Endothelial cell of umbilical vein (primary cell): ENCODE measurements at regions of chr2 and their contacts with region 1.

Region 1: GRCh38 chr2:154375579-154375931 is 322.9 kb upstream of the KCNJ3 start:
- DNase-seq: peak; percentile 46
- H3K4me3 ChIP-seq: no peak overlapping the region
- H3K27ac ChIP-seq: no peak overlapping the region
- H3K4me1 ChIP-seq: no peaks in the 10 kb centered on the region
- H3K27me3 ChIP-seq: no peaks in the 10 kb centered on the region
- CTCF ChIP-seq: peak in 1 of 2 donors; percentile 16
- POLR2A ChIP-seq: no peak

Region 2: GRCh38 chr2:152740743-152741328 is 1634.7 kb before region 1 on chr2:
- CTCF ChIA-PET with region 1: interaction called, 5 read pairs
- POLR2A ChIA-PET with region 1: no interaction called
- dilution Hi-C with region 1: no loop called
- intact Hi-C with region 1: loop called (anchors 5 kb)
- DNase-seq: peak; percentile 78
- H3K4me3 ChIP-seq: no peak overlapping the region
- H3K27ac ChIP-seq: no peak overlapping the region
- H3K4me1 ChIP-seq: peaks cover 5% of the 10 kb centered on the region
- H3K27me3 ChIP-seq: no peaks in the 10 kb centered on the region
- CTCF ChIP-seq: peak; percentile 52
- POLR2A ChIP-seq: no peak

Region 3: DNA sequence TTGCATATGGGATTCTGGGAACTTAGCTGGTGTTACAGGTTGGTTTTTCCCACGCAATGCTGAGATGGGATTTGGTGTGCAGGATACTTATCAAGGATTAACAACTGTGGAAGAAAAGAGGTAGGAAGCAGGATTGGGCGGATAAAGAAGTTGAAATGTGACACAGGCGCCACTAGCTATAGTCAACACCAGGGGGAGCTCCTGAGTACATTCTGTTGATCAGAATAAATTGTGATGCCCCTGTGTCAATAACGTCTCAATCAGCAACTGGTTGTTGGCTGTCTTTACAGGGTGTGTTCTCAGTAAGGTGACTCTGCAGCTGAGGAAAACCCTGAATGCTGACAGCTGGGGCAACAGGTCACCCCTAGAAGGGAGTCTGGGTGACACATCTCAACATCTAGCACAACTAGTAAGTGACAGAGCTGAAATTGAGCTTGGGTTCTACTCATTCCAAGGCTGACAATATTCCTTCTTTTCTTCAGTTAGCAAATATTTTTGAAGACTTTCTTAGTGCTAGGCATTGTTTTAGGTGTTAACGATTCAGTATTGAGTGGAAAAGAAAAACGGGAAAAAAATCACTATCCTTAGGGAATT is 1514.1 kb before region 1 on chr2:
- CTCF ChIA-PET with region 1: interaction called, 25 read pairs
- POLR2A ChIA-PET with region 1: no interaction called
- dilution Hi-C with region 1: no loop called
- intact Hi-C with region 1: no loop called
- DNase-seq: peak; percentile 30
- H3K4me3 ChIP-seq: no peak overlapping the region
- H3K27ac ChIP-seq: no peak overlapping the region
- H3K4me1 ChIP-seq: no peaks in the 10 kb centered on the region
- H3K27me3 ChIP-seq: no peaks in the 10 kb centered on the region
- CTCF ChIP-seq: peak; percentile 55 to 72
- POLR2A ChIP-seq: no peak

Region 4: DNA sequence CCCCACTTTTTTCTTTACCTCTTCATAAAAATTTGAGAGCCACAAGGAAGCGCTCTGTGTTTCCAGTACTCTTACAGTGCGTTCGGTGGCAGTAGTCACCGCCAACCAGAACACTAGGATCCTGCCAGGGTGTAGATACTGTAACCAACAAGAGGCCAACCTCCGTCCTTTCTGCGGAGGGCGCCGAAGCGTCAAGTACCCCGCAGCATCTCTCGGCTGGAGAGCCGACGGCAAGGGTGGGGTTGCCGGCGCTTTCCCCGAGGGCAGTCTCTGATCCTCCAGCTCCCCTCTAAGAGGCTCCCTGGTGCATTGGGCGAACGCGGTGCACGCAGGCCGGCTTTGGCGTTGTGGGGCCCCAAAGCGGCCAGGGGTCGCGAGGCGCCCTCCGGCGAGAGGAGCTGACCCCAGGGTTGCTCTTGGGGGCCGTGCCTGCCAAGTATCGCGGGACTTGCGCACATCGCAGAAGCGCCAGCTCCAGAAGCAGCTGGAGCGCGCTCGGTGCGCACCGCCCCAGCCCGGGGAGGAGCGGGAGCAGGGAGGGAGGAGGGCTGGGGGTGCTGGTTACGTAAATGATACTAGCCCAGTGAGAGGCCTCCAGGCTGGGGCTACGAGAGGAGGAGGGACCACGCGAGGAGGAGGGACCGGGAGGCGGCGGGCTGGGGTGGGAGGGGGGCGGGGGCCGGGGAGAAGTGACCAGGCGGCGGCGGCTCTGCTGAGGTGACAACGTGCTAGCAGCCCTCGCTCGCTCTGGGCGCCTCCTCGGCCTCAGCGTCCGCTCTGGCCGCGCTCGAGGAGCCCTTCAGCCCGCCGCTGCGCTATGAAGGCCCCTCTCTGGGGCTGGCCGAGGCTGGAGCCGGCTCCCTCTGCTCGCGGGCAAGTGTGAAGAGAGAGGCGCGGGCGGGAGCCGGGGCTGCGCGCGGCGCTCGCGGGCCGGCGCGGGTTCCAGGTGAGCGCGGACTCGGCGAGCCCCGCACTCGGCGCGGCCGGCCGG is 504.0 kb before region 1 on chr2 and contains the start of gene GALNT13:
- CTCF ChIA-PET with region 1: interaction called, 8 read pairs
- POLR2A ChIA-PET with region 1: no interaction called
- dilution Hi-C with region 1: no loop called
- intact Hi-C with region 1: loop called (anchors 1 kb)
- DNase-seq: peak; percentile 1
- H3K4me3 ChIP-seq: peak within 1 kb of the TSS in 1 of 3 experiments; percentile 13
- H3K27ac ChIP-seq: no peak within 1 kb of the TSS
- H3K4me1 ChIP-seq: peaks cover 2% of the 10 kb centered on the region
- H3K27me3 ChIP-seq: peaks cover 14 to 21% of the 10 kb centered on the region in 2 experiments
- CTCF ChIP-seq: no peak
- POLR2A ChIP-seq: no peak
- total RNA-seq, gene GALNT13: 0.18 TPM in 1 of 2 replicates, not detected in the other

Region 5: DNA sequence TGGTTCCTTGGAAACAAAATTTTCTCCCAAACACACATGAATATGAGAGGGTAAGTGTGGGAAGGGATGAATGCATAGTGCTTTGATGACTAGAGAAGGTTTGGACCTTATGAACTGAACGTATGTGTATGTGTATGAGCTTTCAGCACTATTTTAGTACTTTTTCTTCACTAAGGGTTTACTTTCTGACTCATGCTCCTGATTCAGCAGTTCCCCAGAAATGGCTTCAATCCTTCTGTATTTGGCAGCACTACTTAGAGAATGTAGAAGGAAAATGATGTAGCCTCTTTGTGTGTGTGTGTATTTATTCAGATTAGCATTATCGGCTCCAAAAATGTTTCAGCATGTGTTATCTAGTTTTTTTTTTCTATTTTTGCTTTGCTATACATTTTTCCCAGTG is 345.1 kb after region 1 on chr2:
- CTCF ChIA-PET with region 1: no interaction called
- POLR2A ChIA-PET with region 1: no interaction called
- dilution Hi-C with region 1: no loop called
- intact Hi-C with region 1: no loop called
- DNase-seq: no peak
- H3K4me3 ChIP-seq: no peak overlapping the region
- H3K27ac ChIP-seq: no peak overlapping the region
- H3K4me1 ChIP-seq: no peaks in the 10 kb centered on the region
- H3K27me3 ChIP-seq: no peaks in the 10 kb centered on the region
- CTCF ChIP-seq: no peak
- POLR2A ChIP-seq: no peak